ENCODE measurements at regions of chrX and their contacts with region 1.

Region 1: DNA sequence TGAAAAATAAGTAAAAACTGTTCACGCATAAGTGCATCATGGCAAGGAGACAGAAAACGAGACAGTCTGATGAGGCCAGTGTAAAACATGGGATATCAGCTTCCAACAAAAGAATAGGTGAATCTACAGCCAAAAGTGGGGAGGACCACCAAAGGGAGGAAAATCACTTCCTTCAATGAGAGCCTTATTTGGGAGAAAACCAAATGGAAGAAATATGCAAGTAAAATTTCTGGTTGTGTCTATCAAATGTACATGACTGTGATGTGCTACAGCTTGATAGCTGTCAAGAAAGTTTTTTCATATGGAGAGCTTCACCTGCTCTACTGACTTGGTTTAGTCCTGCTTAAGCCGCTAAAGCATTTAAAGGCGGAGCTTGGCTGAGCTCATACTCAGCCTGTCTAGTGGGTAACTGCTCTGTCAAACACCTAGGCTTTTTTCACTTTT is 66.2 kb downstream of the MAGEA1 start:
- DNase-seq: peak; percentile 13 to 74 (median 37)
- ATAC-seq: peak; percentile 99
- H3K4me3 ChIP-seq: peak overlapping the region; percentile 10; the same call in 1 of the 2 replicates
- H3K27ac ChIP-seq: peak overlapping the region; percentile 50
- H3K4me1 ChIP-seq: peaks cover 0 to 7% of the 10 kb centered on the region in 2 experiments; a peak in 3 of 5 replicates
- H3K27me3 ChIP-seq: no peaks in the 10 kb centered on the region
- CTCF ChIP-seq: no peak
- EP300 ChIP-seq: no peak
- POLR2A ChIP-seq: peak; percentile 52; the same call in 1 of the 2 replicates
- RAD21 ChIP-seq: peak in 1 of 2 experiments; percentile 10; a peak in 1 of 4 replicates

Region 2: GRCh38 chrX:152958524-152959465 is 286.5 kb before region 1 on chrX:
- CTCF ChIA-PET with region 1: no interaction called
- POLR2A ChIA-PET with region 1: no interaction called
- in situ Hi-C with region 1: loop called (anchors 25 kb)
- intact Hi-C with region 1: no loop called
- DNase-seq: peak; percentile 85 to 93 (median 88)
- ATAC-seq: peak; percentile 99
- H3K4me3 ChIP-seq: peak overlapping the region; percentile 3; the same call in 1 of the 2 replicates
- H3K27ac ChIP-seq: peak overlapping the region; percentile 59
- H3K4me1 ChIP-seq: peaks cover 11 to 13% of the 10 kb centered on the region in 2 experiments; a peak in 4 of 5 replicates
- H3K27me3 ChIP-seq: no peaks in the 10 kb centered on the region
- CTCF ChIP-seq: peak; percentile 77 to 94 (median 91)
- EP300 ChIP-seq: peak; percentile 35; the same call in 1 of the 2 replicates
- POLR2A ChIP-seq: peak; percentile 51; the same call in 1 of the 2 replicates
- RAD21 ChIP-seq: peak; percentile 84 to 95

Region 3: GRCh38 chrX:153153516-153153915 is 91.8 kb before region 1 on chrX:
- CTCF ChIA-PET with region 1: no interaction called
- POLR2A ChIA-PET with region 1: no interaction called
- in situ Hi-C with region 1: loop called (anchors 10 kb)
- intact Hi-C with region 1: no loop called
- DNase-seq: no peak
- ATAC-seq: no peak
- H3K4me3 ChIP-seq: no peak overlapping the region
- H3K27ac ChIP-seq: no peak overlapping the region
- H3K4me1 ChIP-seq: no peaks in the 10 kb centered on the region; a peak in 1 of 5 replicates
- H3K27me3 ChIP-seq: no peaks in the 10 kb centered on the region; a peak in 1 of 5 replicates
- CTCF ChIP-seq: no peak
- EP300 ChIP-seq: no peak
- POLR2A ChIP-seq: no peak
- RAD21 ChIP-seq: no peak

Measured in K562 (cell line).